Pancreas (tissue), 10 donors: ENCODE measurements at regions of chr1 and their contacts with region 1.

Region 1: DNA sequence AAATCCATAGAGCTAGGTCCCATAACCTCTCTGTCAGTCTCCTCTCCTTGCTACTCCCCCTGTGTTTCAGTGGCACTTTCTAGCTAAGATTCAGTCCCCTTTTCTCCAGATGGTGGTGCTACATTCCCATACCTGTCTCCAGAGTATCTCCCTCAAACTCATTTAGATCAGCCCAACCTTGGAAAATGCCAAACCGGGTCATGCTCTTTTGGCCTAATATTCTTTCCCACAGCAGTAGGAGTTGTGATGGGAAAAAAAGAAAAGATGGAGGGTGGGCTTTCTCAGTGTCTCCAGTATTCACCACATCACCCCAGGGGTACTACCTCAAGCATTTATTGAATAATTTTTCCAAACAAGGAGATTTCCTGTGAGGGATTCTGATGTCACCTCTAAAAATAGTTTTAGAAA is 3.2 kb upstream of the RXFP4 start:
- DNase-seq: peak in 1 of 6 donors; percentile 37
- ATAC-seq: peak in 2 of 4 donors; percentile 13 to 26
- H3K4me3 ChIP-seq: no peak overlapping the region
- H3K27ac ChIP-seq: peak overlapping the region in 1 of 4 donors; percentile 2
- H3K4me1 ChIP-seq: peaks cover 7 to 14% (median 8%) of the 10 kb centered on the region in 3 donors
- H3K27me3 ChIP-seq: no peaks in the 10 kb centered on the region
- CTCF ChIP-seq: peak in 2 of 4 donors; percentile 19 to 21

Region 2: DNA sequence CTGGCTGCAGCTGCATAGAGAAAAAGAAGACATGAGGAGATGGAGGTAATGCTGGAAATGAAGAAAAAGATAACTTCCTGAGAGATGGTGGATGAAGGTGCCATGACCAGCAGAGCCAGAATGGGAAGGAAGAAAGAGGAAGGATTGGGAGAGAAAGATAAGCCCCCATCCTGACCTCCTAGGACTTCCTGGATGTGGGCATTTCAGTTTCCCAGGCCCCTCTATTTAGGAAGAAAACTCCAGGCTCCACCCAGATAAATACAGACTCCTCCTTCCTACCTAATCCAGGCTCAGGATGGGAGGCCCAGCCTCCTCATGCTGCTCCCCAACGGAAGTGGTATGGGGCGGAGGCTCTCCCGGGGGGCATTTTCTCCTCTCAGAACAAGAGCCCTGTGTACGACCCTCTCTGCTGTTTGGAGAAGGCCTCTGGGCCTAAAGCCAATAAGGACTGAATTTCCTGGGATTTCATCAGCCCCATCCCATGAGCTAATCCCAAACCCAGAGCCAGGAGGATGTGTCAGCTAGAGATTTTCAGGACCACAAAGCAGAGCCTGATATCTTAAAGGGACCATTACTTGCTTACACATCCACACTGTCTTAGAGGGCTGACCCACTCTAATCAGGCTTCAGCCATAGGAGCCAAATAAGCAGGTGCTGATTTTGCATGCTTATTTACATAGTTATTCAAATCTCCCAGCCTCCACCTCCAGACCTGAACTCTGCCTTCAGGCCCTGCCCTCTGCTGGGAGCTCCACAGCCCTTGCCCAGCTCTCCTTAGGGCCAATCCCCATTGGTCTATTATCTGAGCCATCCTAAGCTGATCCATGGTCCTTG is 45.2 kb after region 1 on chr1:
- intact Hi-C with region 1: loop called in 2 of 3 experiments (anchors 5 kb)
- DNase-seq: peak in 1 of 6 donors; percentile 73
- ATAC-seq: peak; percentile 24 to 42 (median 24)
- H3K4me3 ChIP-seq: no peak overlapping the region
- H3K27ac ChIP-seq: no peak overlapping the region
- H3K4me1 ChIP-seq: peaks cover 0 to 10% (median 0%) of the 10 kb centered on the region in 3 donors
- H3K27me3 ChIP-seq: no peaks in the 10 kb centered on the region
- CTCF ChIP-seq: no peak